Activated CD4-positive, alpha-beta T cell treated with anti-CD3 and anti-CD28 coated beads, Interleukin-2, amount 10 ng/mL, durations not matched to agents 7 days and 5 days (primary cell): ENCODE measurements at regions of chr1 and their contacts with region 1.

Region 1: GRCh38 chr1:41673378-41673777 is 188.9 kb upstream of the EDN2 start:
- DNase-seq: peak; percentile 81
- H3K4me3 Mint-ChIP-seq: peak overlapping the region; percentile 65
- H3K27ac Mint-ChIP-seq: peak overlapping the region; percentile 92
- H3K4me1 Mint-ChIP-seq: peaks cover 91% of the 10 kb centered on the region
- H3K27me3 Mint-ChIP-seq: no peaks in the 10 kb centered on the region

Region 2: GRCh38 chr1:41662061-41662764 is 11.2 kb before region 1 on chr1:
- CTCF ChIA-PET with region 1: interaction called, 24 read pairs
- POLR2A ChIA-PET with region 1: interaction called, 7 read pairs
- DNase-seq: peak; percentile 78
- H3K4me3 Mint-ChIP-seq: no peak overlapping the region
- H3K27ac Mint-ChIP-seq: no peak overlapping the region
- H3K4me1 Mint-ChIP-seq: peaks cover 81% of the 10 kb centered on the region
- H3K27me3 Mint-ChIP-seq: no peaks in the 10 kb centered on the region

Region 3: DNA sequence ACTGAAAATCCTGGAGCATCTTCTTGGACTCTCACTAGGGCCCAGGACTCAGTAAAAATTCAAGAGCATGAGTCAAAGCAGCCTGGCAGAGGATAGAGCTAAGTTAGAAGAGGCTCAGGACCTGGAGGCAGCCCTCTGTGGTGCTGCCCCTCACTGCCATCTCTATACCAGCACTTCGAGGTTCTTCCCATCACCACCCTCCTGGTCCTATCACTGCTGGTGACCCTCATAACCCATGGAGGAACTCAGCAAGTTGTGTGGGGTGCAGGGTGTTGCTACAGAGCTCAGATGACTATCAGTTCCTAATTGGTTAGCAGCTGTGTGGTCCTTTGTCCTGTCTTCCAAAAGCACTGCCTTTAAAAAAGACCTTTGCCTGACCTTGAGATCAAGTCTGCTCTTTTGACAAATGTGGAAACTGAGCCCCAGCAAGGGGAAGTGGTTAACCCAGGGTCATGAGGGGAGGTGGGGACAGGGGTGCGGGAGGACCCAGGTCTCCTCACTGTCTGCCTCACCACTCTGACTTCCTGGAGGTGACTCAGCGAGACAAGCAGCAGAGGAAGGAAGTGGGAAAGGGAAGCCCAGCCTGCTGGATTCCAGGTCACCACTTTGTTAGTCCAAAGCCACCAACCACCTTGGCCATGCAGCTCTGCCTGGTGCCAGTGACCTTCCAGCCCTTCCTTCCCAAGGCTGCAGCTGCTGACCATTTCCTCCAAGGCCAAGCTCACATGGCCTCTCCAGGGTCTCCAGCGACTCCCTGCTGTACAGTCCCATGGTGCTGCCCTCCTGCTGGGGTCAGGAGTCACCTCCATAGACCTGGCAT is 10.5 kb after region 1 on chr1:
- CTCF ChIA-PET with region 1: interaction called, 34 read pairs
- POLR2A ChIA-PET with region 1: interaction called, 3 read pairs
- DNase-seq: peak; percentile 54
- H3K4me3 Mint-ChIP-seq: peak overlapping the region; percentile 40
- H3K27ac Mint-ChIP-seq: peak overlapping the region; percentile 66
- H3K4me1 Mint-ChIP-seq: peaks cover 91% of the 10 kb centered on the region
- H3K27me3 Mint-ChIP-seq: no peaks in the 10 kb centered on the region